AG04450 (cell line): ENCODE measurements at regions of chr12 and their contacts with region 1.

Region 1: GRCh38 chr12:85920324-85920947 is 46.3 kb downstream of the NTS start:
- DNase-seq: no peak
- H3K4me3 ChIP-seq: no peak overlapping the region
- H3K27ac ChIP-seq: no peak overlapping the region
- H3K27me3 ChIP-seq: no peaks in the 10 kb centered on the region
- CTCF ChIP-seq: peak; percentile 62

Region 2: DNA sequence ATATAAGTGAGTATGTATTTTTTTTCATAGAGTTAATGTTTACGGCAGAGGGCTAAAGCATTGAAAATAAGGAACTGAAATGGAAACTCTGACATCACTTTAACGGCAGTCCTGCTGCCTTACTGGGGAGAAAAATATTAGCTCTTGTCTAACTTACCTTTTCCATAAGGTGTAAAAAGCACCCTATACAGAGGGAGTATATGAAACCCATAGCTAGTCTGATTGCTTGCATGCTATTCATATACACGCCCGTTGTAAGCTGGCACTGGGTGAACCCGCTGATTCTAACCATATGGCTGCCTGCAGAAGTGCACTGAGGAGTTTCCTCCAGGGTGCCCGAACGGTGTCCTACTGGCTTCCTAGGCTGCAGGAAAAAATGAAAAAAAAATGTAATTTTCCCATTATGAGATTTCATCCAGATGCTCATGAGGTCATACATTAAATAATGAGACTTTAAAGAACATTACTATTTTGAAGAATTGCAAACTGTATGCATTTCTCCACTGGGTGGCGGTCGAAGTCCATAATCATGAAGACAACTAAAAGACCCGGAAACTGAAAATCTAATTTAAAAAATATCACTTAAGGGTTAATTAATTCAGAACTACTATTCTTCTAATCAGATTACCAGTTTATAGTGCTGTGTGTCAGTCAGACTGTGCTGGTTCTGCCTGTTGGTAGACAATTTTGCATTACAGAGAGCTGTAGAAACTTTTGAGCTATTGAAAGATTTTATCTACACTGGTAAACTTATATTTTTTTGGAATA is 495.7 kb before region 1 on chr12:
- CTCF ChIA-PET with region 1: interaction called, 10 read pairs
- POLR2A ChIA-PET with region 1: no interaction called
- DNase-seq: no peak
- H3K4me3 ChIP-seq: no peak overlapping the region
- H3K27ac ChIP-seq: no peak overlapping the region
- H3K27me3 ChIP-seq: no peaks in the 10 kb centered on the region
- CTCF ChIP-seq: peak; percentile 49

Region 3: GRCh38 chr12:85468356-85469157 is 451.9 kb before region 1 on chr12:
- CTCF ChIA-PET with region 1: interaction called, 26 read pairs
- POLR2A ChIA-PET with region 1: no interaction called
- DNase-seq: peak; percentile 8
- H3K4me3 ChIP-seq: peak overlapping the region; percentile 43
- H3K27ac ChIP-seq: no peak overlapping the region
- H3K27me3 ChIP-seq: no peaks in the 10 kb centered on the region
- CTCF ChIP-seq: peak; percentile 86

Region 4: DNA sequence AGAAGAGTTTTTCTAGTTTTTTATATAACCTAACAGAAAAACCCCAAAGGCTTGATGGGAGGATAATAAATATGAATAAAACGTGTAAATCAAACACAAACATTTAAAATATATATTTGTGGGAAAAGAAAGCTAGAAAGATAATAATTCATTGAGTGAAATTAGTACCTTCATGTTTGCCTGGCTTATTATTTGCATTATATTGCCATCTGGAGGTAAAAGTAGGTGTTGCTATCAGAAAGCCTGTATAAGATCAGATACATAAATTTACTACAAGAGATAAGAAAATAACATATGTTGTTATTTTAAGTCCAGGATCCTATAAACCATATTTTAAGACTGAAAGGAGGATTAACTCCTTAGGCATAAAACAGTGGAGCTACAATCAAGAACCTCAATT is 31.4 kb after region 1 on chr12:
- CTCF ChIA-PET with region 1: interaction called, 14 read pairs
- POLR2A ChIA-PET with region 1: no interaction called
- DNase-seq: no peak
- H3K4me3 ChIP-seq: no peak overlapping the region
- H3K27ac ChIP-seq: no peak overlapping the region
- H3K27me3 ChIP-seq: no peaks in the 10 kb centered on the region
- CTCF ChIP-seq: peak; percentile 49

Region 5: DNA sequence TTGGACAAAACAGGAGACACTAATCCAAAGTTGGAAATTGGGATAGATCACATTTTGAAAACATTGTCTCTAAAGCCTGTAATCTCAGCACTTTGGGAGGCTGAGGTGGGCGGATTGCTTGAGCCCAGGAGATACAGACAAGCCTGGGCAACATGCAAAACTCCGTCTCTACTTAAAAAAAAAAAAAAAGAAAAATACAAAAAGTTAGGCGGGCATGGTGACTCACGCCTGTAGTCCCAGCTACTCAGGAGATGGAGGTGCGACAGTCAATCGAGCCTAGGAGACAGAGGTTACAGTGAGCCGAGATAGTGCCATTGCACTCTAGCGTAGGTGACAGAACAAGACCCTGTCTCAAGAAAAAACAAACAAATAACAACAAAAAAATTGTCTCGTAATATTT is 183.7 kb after region 1 on chr12:
- CTCF ChIA-PET with region 1: no interaction called
- POLR2A ChIA-PET with region 1: no interaction called
- DNase-seq: no peak
- H3K4me3 ChIP-seq: no peak overlapping the region
- H3K27ac ChIP-seq: no peak overlapping the region
- H3K27me3 ChIP-seq: no peaks in the 10 kb centered on the region
- CTCF ChIP-seq: no peak